OCI-LY7 (cell line): ENCODE measurements at regions of chr17 and their contacts with region 1.

Region 1: DNA sequence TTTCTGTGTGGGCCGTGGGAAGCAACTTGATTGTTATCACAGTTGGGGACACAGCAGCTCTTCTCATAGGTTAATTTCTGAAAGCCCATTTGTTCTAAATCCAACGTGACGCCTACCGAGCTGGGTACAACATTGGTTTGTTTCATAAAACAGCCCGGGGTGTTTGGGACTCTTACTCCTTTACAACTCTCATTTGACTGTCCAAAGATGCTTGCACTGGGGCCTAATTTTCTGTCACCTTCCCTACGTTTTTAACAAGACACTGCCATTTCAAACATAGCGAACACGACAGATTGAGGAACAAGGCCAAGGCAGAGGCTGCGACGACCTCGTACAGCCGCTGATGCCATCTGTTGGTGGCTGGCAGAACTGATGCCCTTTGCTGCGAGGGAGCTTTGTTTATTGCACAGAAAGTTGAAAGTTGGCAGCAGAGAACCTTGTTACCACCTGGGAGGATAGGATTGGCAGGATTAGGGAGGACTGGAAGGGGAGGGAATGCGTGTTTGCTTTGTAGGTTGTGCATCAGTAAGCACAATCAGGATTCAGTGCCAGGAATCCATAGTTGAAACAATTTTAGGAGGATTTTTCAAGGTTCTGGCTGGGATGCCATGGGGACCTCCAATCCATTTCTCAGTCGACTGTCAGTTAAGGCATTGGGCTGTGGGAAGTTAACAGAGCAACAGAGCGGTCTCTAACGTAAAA is 98.3 kb downstream of the PITPNC1 start:
- DNase-seq: peak; percentile 85
- H3K4me3 ChIP-seq: no peak overlapping the region
- H3K27ac ChIP-seq: no peak overlapping the region
- H3K4me1 ChIP-seq: peaks cover 18% of the 10 kb centered on the region
- CTCF ChIP-seq: peak; percentile 98

Region 2: DNA sequence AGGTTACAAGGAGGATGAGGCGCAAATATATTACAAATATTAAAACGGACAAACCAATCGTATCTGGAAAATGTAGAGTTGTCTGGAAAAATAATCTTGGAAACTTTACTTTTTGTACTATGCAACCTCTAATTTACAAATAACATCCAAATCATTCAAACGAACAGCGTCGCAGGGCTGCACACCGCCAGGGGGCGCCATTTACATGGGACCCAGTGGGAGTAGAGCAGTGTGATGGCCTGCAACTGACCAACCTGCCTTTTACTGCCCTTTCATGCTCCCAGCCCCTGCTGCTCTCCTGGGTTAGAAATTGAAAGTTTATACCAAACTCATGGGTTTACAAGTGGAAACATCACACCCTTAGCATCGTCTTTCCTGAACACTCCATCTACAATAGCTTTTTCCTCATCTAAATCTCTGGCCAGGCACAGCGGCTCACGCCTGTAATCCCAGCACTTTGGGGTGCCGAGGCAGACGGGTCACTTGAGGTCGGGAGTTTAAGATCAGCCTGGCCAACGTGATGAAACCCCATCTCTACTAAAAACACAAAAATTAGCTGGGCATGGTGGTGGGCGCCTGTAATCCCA is 88.3 kb before region 1 on chr17:
- CTCF ChIA-PET with region 1: interaction called, 3 read pairs
- POLR2A ChIA-PET with region 1: interaction called, 5 read pairs
- intact Hi-C with region 1: loop called (anchors 1 kb)
- DNase-seq: peak; percentile 56
- H3K4me3 ChIP-seq: no peak overlapping the region
- H3K27ac ChIP-seq: no peak overlapping the region
- H3K4me1 ChIP-seq: no peaks in the 10 kb centered on the region
- CTCF ChIP-seq: peak; percentile 92

Region 3: GRCh38 chr17:67594115-67594880 is 118.9 kb after region 1 on chr17:
- CTCF ChIA-PET with region 1: no interaction called
- POLR2A ChIA-PET with region 1: no interaction called
- intact Hi-C with region 1: no loop called
- DNase-seq: no peak
- H3K4me3 ChIP-seq: no peak overlapping the region
- H3K27ac ChIP-seq: no peak overlapping the region
- H3K4me1 ChIP-seq: no peaks in the 10 kb centered on the region
- CTCF ChIP-seq: no peak

Region 4: GRCh38 chr17:67689534-67690177 is 214.3 kb after region 1 on chr17:
- CTCF ChIA-PET with region 1: no interaction called
- POLR2A ChIA-PET with region 1: no interaction called
- intact Hi-C with region 1: loop called (anchors 5 kb)
- DNase-seq: peak; percentile 80
- H3K4me3 ChIP-seq: no peak overlapping the region
- H3K27ac ChIP-seq: no peak overlapping the region
- H3K4me1 ChIP-seq: no peaks in the 10 kb centered on the region
- CTCF ChIP-seq: peak; percentile 96